Heart left ventricle (tissue), 16 donors: ENCODE measurements at regions of chr2 and their contacts with region 1.

Region 1: DNA sequence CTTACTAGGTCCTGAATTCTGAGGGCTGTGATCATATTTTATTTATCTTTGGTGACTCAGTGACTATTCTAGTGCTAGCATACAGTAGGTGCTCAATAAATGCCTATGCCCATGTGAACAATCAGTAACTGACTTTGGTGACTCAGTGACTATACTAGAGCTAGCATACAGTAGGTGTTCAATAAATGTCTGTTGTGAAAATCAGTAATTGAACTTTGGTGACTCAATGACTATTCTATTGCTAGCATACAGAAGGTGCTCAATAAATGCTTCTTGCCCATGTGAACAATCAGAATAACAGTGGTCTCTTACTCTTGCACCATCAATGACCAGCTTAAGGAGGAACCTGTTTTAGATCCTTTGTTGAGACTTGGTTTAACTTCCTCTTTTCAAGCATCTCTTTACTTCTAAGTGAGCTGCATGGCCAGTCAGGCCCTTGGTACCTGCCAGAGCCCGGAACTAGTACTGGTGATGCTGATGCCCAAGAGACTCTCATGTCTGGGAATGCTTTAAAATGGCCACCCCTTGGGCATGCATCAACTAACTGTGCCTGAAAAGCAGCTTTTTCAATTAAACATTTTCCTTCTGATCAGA is 214.9 kb upstream of the SPRED2 start:
- DNase-seq: no peak
- ATAC-seq: no peak
- H3K4me3 ChIP-seq: no peak overlapping the region
- H3K27ac ChIP-seq: no peak overlapping the region
- H3K4me1 ChIP-seq: no peaks in the 10 kb centered on the region
- H3K27me3 ChIP-seq: no peaks in the 10 kb centered on the region
- CTCF ChIP-seq: no peak
- POLR2A ChIP-seq: no peak

Region 2: GRCh38 chr2:65107530-65107929 is 539.8 kb before region 1 on chr2:
- intact Hi-C with region 1: no loop called
- DNase-seq: no peak
- ATAC-seq: peak in 3 of 4 donors; percentile 41 to 53 (median 45)
- H3K4me3 ChIP-seq: no peak overlapping the region
- H3K27ac ChIP-seq: no peak overlapping the region
- H3K4me1 ChIP-seq: peaks cover 0 to 40% (median 17%) of the 10 kb centered on the region in 12 donors
- H3K27me3 ChIP-seq: no peaks in the 10 kb centered on the region
- CTCF ChIP-seq: no peak
- POLR2A ChIP-seq: no peak

Region 3: DNA sequence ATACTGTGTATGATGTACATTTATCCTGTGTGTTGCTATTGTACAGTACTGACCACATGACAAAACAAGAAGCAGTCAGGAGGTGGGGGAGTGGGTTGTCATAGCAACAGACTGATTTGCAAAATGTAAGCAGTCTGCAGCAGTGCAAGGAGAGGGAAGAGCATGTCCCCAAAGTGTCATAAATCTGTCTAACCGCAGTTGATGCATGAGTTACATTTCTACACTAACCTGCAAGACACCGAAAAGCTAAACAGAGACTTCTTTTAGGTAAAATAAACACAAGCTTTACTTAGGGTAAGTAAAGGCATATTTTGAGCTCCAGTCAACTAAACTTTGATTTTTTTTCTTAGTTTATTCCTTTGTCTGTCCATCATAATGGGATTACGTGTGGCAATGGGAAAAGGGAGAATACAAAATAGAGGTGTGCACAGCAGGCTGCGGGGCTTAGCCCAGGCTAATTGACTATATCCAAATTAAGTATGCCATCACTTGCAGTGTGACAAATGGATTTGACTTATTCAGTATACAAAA is 922.0 kb after region 1 on chr2:
- intact Hi-C with region 1: loop called in 2 of 10 experiments (anchors 10 kb)
- DNase-seq: no peak
- ATAC-seq: no peak
- H3K4me3 ChIP-seq: no peak overlapping the region
- H3K27ac ChIP-seq: peak overlapping the region in 1 of 12 donors; percentile 33
- H3K4me1 ChIP-seq: peaks cover 0 to 15% (median 0%) of the 10 kb centered on the region in 12 donors
- H3K27me3 ChIP-seq: peaks cover 0 to 9% (median 0%) of the 10 kb centered on the region in 9 donors
- CTCF ChIP-seq: no peak
- POLR2A ChIP-seq: no peak